Mammary epithelial cell (primary cell): ENCODE measurements at regions of chr19 and their contacts with region 1.

Region 1: GRCh38 chr19:9251236-9251635 is 506 bp downstream of the OR7E24 start:
- DNase-seq: no peak
- H3K4me3 ChIP-seq: no peak overlapping the region
- H3K27ac ChIP-seq: no peak overlapping the region
- H3K4me1 ChIP-seq: no peaks in the 10 kb centered on the region
- H3K27me3 ChIP-seq: no peaks in the 10 kb centered on the region
- CTCF ChIP-seq: no peak

Region 2: GRCh38 chr19:8973501-8974091 is 277.6 kb before region 1 on chr19:
- CTCF ChIA-PET with region 1: no interaction called
- dilution Hi-C with region 1: loop called (anchors 25 kb)
- in situ Hi-C with region 1: no loop called
- intact Hi-C with region 1: no loop called
- DNase-seq: no peak
- H3K4me3 ChIP-seq: no peak overlapping the region
- H3K27ac ChIP-seq: no peak overlapping the region
- H3K4me1 ChIP-seq: no peaks in the 10 kb centered on the region
- H3K27me3 ChIP-seq: no peaks in the 10 kb centered on the region
- CTCF ChIP-seq: no peak